ENCODE measurements at regions of chr12 and their contacts with region 1.

Region 1: GRCh38 chr12:53251477-53252348 is 16.4 kb upstream of the ESPL1 start:
- DNase-seq: no peak
- H3K4me3 ChIP-seq: peak overlapping the region; percentile 83
- H3K27me3 ChIP-seq: no peaks in the 10 kb centered on the region
- CTCF ChIP-seq: peak; percentile 47

Region 2: GRCh38 chr12:53267999-53268647 is 16.4 kb after region 1 on chr12 and contains the start of gene ESPL1:
- CTCF ChIA-PET with region 1: interaction called, 40 read pairs
- POLR2A ChIA-PET with region 1: no interaction called
- DNase-seq: peak; percentile 26
- H3K4me3 ChIP-seq: peak within 1 kb of the TSS; percentile 78
- H3K27me3 ChIP-seq: no peaks in the 10 kb centered on the region
- CTCF ChIP-seq: peak; percentile 31; the same call in 1 of the 2 replicates
- polyA plus RNA-seq, gene ESPL1: 3.0 and 7.3 TPM in 2 replicates

Region 3: GRCh38 chr12:53305515-53305914 is 53.8 kb after region 1 on chr12:
- CTCF ChIA-PET with region 1: no interaction called
- POLR2A ChIA-PET with region 1: no interaction called
- DNase-seq: no peak
- H3K4me3 ChIP-seq: no peak overlapping the region
- H3K27me3 ChIP-seq: no peaks in the 10 kb centered on the region
- CTCF ChIP-seq: no peak

Measured in BJ (cell line).